ENCODE measurements at regions of chr16 and their contacts with region 1.

Region 1: DNA sequence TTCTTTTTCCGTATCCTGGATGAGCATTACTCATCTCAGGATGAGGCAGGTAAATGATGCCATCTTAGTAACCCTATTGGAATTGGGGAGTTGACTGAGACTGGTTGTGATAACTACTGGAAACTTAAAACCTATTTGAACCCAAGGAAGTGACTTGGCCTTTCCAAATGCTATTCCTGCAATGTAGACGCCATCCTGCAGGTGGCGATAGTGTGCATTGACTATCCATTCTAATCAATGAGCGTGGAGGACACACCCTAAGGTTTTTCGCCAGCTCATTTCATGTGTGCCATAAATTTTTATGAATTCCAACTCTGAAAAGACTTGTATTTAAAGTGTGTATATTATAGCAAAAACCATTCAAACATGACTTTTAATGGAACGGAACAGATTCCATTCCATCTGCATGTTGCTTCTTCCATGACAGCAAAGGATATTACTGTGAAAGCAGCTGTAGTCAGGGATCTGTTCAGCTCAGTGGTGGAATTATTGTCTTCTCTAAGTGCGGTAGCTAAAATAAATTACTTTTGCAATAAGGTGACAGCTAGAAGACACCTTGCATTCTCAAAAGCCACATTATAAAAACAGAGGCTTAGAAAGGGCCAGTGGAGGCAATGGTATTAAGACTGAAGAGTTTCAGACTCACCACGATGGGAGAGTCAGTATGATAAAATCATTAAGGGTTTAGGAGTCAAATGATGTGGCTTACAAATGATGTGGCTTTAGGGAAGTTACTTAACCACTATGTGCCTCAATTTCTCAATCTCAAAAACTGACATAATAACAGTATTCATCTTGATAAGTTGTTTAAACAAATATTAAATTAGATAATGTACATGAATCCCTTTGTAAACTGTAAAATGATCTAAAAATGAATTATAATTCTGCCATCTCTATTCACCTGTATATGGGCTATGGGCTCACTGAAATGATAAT is 55.5 kb downstream of the SYT17 start:
- DNase-seq: peak; percentile 69
- H3K4me3 Mint-ChIP-seq: no peak overlapping the region
- H3K27ac Mint-ChIP-seq: no peak overlapping the region
- H3K4me1 Mint-ChIP-seq: no peaks in the 10 kb centered on the region
- H3K27me3 Mint-ChIP-seq: peaks cover 5% of the 10 kb centered on the region

Region 2: DNA sequence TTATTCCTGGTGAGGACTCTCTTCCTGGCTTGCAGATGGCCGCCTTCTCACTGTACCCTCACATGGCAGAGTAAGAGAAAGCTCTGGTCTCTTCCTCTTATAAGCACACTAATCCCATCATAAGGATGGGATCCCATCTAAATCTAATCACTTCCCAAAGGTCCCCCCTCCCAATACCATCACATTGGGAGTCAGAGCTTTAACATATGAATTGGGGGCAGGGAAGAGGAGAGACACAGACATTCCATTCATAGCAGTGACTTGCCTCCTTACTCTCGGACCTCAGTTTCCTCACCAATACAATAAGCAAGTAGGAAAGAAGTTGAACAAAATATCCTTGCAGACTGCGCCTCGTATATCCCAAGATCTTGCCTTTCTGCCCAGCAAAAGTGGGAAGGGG is 63.7 kb after region 1 on chr16:
- CTCF ChIA-PET with region 1: no interaction called
- intact Hi-C with region 1: no loop called
- DNase-seq: no peak
- H3K4me3 Mint-ChIP-seq: no peak overlapping the region
- H3K27ac Mint-ChIP-seq: no peak overlapping the region
- H3K4me1 Mint-ChIP-seq: peaks cover 4% of the 10 kb centered on the region
- H3K27me3 Mint-ChIP-seq: peaks cover 6% of the 10 kb centered on the region

Region 3: GRCh38 chr16:19375561-19376158 is 152.2 kb after region 1 on chr16:
- CTCF ChIA-PET with region 1: interaction called, 3 read pairs
- intact Hi-C with region 1: loop called (anchors 1 kb)
- DNase-seq: peak; percentile 54
- H3K4me3 Mint-ChIP-seq: no peak overlapping the region
- H3K27ac Mint-ChIP-seq: no peak overlapping the region
- H3K4me1 Mint-ChIP-seq: no peaks in the 10 kb centered on the region
- H3K27me3 Mint-ChIP-seq: no peaks in the 10 kb centered on the region

Measured in activated naive CD4-positive, alpha-beta T cell treated with anti-CD3 and anti-CD28 coated beads for 36 hours (primary cell).